ENCODE measurements at regions of chr22 and their contacts with region 1.

Region 1: GRCh38 chr22:36379593-36380361 is 8.0 kb downstream of the MYH9 start:
- DNase-seq: peak; percentile 61
- H3K4me3 Mint-ChIP-seq: peak overlapping the region; percentile 79
- H3K27ac Mint-ChIP-seq: peak overlapping the region; percentile 100
- H3K4me1 Mint-ChIP-seq: peaks cover 93% of the 10 kb centered on the region
- H3K27me3 Mint-ChIP-seq: no peaks in the 10 kb centered on the region

Region 2: DNA sequence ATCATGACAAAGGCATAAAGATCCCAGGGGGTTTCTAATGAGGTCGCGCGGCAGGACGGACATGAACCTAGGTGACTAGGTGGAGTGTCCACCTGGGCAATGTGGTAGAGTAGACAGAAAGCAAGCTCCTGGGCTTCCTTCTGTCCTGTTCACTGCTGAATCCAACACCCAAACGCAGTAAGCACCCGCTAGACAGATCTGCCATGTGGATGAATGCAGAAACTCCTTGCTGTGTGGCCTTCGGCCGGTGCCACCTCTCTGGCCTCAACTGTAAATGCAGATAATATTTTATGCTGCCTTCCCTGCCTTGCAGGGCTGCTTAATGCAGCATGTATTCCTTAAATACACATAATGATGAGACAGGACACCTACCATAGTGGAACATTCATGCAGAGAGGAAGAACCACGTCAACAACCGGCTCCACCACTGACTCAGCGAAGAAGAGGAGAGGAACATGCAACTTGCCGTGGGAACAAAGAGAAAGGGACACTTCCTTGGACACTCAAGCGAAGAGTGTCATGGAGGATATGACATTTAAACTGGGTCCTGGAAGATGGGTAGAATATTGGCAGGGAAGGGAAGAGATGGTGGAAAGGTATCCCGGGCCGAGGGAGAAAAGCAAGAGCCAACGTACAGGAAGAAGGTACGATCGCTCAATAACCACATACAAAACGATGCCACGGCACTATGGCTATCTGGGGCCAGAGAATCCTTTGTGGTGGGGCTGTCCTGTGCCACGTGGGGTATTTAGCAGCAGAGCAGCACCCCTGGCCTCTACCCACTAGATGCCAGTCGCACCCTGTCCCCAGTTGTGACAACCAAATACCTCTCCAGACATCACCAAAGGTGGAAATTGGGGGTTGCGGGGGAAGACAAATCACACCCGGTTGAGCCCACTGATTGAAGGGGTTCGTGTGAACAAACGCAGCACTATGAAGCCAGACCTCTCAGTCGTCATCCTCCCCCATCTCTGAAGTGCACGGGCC is 22.8 kb before region 1 on chr22:
- CTCF ChIA-PET with region 1: interaction called, 6 read pairs
- intact Hi-C with region 1: loop called (anchors 1 kb)
- DNase-seq: peak; percentile 78
- H3K4me3 Mint-ChIP-seq: peak overlapping the region; percentile 73
- H3K27ac Mint-ChIP-seq: peak overlapping the region; percentile 96
- H3K4me1 Mint-ChIP-seq: peaks cover 98% of the 10 kb centered on the region
- H3K27me3 Mint-ChIP-seq: no peaks in the 10 kb centered on the region

Region 3: GRCh38 chr22:36486619-36487384 is 107.0 kb after region 1 on chr22:
- CTCF ChIA-PET with region 1: no interaction called
- intact Hi-C with region 1: no loop called
- DNase-seq: peak; percentile 70
- H3K4me3 Mint-ChIP-seq: no peak overlapping the region
- H3K27ac Mint-ChIP-seq: no peak overlapping the region
- H3K4me1 Mint-ChIP-seq: peaks cover 3% of the 10 kb centered on the region
- H3K27me3 Mint-ChIP-seq: no peaks in the 10 kb centered on the region

Measured in activated naive CD4-positive, alpha-beta T cell treated with anti-CD3 and anti-CD28 coated beads for 36 hours (primary cell).